ENCODE measurements at regions of chr3 and their contacts with region 1.

Region 1: DNA sequence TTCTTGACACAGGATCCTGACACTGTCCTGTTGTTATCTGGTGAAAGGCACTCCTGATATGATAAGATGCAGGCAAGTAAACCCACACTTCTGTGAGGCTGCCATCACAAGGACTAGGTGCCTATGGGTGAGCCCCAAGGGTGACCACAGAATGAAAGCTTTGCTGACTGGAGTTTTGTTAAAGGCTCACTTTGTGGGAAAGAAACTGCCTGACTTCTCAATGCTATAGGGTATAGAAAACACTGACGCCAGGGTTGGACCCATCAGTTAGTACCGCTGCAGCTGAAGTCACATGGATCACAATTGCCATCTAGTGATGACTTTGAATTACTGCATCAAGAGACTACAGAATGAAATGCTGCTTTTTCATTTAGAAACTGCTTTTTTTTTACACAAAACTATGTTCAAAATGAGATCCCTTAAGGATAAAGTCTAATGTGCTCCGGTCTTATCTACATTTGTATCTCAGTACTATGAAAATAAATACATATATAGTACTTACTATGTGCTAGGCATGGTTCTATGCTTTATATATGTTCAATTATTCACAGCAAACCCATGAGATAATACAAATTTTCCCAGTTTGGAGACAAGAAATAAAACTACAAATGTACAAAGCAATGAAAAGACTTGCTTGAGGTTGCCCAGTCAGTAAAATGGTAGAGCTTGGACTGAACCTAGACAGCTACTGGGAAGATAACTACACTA is 64.2 kb upstream of the CMSS1 start:
- DNase-seq: no peak
- H3K4me3 ChIP-seq: no peak overlapping the region
- H3K27ac ChIP-seq: peak overlapping the region; percentile 65 to 70
- H3K4me1 ChIP-seq: peaks cover 0 to 47% of the 10 kb centered on the region in 2 donors
- H3K27me3 ChIP-seq: no peaks in the 10 kb centered on the region
- CTCF ChIP-seq: peak; percentile 48 to 87 (median 78)

Region 2: DNA sequence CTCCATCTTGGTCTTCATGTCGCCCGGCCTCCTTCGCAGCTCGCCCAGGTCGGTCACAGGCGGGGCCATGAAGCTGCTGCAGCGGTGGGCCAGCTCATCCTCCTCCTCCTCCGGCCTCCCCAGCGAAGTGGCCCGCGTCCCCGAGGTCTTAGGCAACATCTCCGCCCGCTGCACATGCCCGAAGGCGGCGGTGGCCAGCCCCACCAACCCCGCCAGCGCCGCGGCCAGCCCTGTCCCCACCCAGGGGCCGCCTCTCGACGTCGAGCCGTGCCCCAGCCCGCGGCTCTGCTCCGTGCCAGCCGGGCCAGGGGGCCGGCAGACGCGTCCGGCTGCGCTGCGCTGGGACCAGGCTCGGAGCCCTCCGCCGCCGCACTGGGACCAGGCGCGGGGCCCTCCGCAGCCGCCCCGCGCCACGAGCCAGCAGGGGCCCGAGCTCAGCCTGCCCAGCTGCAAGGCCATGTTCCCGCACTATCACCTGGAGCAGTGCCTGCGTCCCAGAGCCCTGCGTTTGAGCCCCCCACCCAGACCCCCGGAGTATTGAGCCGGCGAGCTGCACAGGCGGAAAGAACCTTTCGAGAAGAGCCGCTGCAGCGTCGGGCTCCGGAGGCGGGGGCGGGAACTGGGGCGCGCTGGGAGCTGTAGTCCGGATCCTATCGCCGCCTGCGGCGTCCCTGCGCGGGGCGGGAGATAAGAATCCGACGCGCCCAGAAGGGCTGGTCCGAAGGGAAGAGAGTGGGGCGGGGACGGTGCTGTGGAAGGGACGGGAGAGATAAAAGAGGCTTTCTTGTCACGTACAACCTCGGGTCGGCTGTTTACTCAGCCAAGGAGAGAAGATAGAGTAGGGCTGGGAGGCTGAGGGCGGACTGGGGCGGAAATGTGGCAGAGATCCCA is 1160.1 kb before region 1 on chr3 and contains the start of gene CPOX:
- intact Hi-C with region 1: loop called (anchors 10 kb)
- DNase-seq: peak; percentile 31 to 92
- H3K4me3 ChIP-seq: peak within 1 kb of the TSS; percentile 77 to 94
- H3K27ac ChIP-seq: peak within 1 kb of the TSS; percentile 83 to 91
- H3K4me1 ChIP-seq: peaks cover 0 to 12% of the 10 kb centered on the region in 2 donors
- H3K27me3 ChIP-seq: no peaks in the 10 kb centered on the region
- CTCF ChIP-seq: no peak
- total RNA-seq, gene CPOX: 34.8 TPM

Region 3: GRCh38 chr3:98994128-98994762 is 759.2 kb before region 1 on chr3:
- intact Hi-C with region 1: loop called (anchors 10 kb)
- DNase-seq: no peak
- H3K4me3 ChIP-seq: no peak overlapping the region
- H3K27ac ChIP-seq: no peak overlapping the region
- H3K4me1 ChIP-seq: no peaks in the 10 kb centered on the region
- H3K27me3 ChIP-seq: no peaks in the 10 kb centered on the region
- CTCF ChIP-seq: peak; percentile 53 to 75 (median 71)

Region 4: DNA sequence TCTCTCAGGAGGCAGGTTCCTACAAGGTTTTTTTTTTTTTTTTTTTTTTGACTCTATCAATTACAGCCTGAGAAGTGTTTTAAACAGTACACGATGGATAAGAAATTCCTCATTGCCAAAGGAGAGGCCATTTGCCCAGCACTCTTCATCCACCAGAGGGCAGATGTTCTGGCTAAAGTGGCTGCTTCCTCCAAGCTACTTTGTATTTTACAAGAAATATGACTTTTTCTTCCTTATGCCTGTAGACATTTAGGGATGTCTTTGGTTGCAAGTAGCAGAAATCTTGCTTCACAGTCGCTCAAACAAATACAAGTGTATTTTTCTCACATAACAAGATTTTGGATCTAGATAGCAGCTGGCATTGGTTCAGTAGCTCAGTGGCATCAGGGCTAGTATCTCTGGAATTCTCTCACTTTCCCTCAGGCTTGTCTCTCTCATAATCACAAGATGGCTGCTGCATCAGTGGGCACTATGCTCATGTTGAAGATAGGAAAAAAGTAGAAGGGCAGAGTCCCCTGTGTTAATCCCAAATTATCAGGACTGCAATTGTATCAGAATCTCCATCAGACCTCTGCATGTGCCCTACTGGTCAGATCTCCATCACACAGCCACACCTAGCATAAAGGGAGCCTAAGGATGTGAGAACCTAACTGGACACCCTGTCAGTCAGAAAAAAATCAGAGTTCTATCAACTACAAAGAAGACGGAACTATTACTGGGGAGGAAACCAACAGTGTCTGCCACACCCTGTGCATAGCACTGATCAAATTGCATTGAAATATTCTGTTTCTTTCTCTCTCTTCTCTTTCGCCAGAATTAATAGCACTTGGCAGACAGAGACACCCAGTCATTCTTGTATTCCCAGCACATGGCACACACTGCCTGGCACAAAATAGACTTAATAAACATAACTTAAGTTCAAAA is 253.9 kb before region 1 on chr3:
- intact Hi-C with region 1: loop called (anchors 2 kb)
- DNase-seq: no peak
- H3K4me3 ChIP-seq: peak overlapping the region in 1 of 2 donors; percentile 1
- H3K27ac ChIP-seq: peak overlapping the region; percentile 72 to 87
- H3K4me1 ChIP-seq: peaks cover 10 to 39% of the 10 kb centered on the region in 2 donors
- H3K27me3 ChIP-seq: no peaks in the 10 kb centered on the region
- CTCF ChIP-seq: peak; percentile 23 to 65 (median 59)

Region 5: DNA sequence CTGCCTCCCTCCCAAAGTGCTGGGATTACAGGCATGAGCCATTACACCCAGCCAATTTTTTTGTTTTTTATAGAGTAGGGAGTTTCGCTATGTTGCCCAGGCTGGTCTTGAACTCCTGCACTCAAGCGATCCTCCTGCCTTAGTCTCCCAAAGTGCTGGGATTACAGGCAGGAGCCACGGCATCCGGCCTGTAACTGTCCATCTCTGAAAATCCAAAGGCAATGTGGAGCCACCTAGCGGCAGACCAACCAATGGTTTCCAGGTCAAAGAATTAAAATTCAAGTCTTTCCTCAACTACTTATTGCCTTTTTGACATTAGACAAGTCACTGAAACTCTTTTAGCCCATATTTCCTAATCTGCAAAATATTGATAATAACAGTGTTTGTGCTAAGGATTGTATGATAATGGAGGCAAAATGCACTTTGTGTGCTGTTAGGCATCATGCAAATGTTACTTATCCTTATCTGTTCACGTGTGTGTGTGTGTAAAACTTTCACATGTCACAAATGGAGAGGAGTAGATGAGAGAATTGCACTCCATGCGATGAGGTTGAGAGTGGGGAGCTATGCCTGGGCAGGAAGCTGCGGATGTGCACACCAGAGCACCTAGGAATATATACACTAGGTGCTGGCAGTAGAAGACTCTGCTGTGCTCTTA is 66.3 kb before region 1 on chr3:
- intact Hi-C with region 1: loop called (anchors 5 kb)
- DNase-seq: peak in 1 of 2 donors; percentile 74
- H3K4me3 ChIP-seq: no peak overlapping the region
- H3K27ac ChIP-seq: peak overlapping the region; percentile 21 to 50
- H3K4me1 ChIP-seq: peaks cover 0 to 29% of the 10 kb centered on the region in 2 donors
- H3K27me3 ChIP-seq: no peaks in the 10 kb centered on the region
- CTCF ChIP-seq: peak; percentile 58 to 64 (median 61)